Prostate gland (tissue), 2 donors: ENCODE measurements at regions of chr7 and their contacts with region 1.

Region 1: DNA sequence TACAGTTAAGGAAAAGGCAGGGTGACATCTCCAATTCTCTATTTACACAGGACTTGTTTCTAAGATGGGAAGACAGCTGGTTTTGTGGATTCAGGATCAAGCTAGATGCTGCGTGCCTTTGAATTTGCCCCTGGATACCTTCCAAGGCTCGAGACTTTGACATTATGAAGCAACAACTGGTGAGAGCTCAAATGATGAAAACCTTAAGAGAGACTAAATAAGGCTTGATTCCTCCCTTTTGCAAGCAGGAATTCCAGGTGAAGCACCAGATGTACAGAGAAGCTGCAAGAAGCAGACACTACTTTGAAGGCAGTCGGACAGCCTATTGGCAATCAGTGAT is 81.0 kb downstream of the ATXN7L1 start:
- DNase-seq: no peak
- H3K4me3 ChIP-seq: no peak overlapping the region
- H3K27ac ChIP-seq: peak overlapping the region; percentile 14 to 47
- H3K4me1 ChIP-seq: peaks cover 7% of the 10 kb centered on the region
- H3K27me3 ChIP-seq: no peaks in the 10 kb centered on the region
- CTCF ChIP-seq: no peak
- POLR2A ChIP-seq: no peak

Region 2: DNA sequence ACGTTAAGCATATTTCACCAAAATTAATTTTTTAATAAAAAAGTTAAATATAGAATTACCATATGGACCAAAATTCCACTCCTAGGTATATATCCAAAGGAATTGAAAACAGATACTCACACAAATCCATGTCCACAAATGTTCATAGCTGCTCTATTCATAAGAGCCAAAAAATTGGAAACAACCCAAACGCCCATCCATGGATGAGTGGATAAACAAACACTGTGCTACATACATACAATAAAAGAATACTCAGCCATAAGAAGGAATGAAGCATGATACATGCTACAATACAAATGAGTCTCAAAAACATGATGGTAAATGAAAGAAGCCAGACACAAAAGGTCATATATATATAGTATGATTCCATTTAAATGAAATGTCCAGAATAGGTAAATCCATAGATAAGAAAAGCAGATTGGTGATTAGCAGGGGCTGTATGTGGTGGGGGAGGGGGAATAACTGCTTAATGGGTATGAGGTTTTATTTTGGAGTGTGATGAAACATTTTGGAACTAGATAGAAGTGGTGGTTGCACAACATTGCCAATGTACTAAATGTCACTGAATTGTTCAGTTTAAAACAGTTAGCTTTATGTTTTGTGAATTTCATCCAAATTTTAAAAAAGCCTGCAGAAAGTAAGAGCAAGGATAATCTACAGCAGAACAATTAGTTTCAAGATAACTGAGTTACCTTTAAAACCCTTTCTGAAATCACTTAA is 112.9 kb before region 1 on chr7:
- intact Hi-C with region 1: no loop called
- DNase-seq: no peak
- H3K4me3 ChIP-seq: no peak overlapping the region
- H3K27ac ChIP-seq: no peak overlapping the region
- H3K4me1 ChIP-seq: peaks cover 4% of the 10 kb centered on the region
- H3K27me3 ChIP-seq: no peaks in the 10 kb centered on the region
- CTCF ChIP-seq: no peak
- POLR2A ChIP-seq: no peak

Region 3: DNA sequence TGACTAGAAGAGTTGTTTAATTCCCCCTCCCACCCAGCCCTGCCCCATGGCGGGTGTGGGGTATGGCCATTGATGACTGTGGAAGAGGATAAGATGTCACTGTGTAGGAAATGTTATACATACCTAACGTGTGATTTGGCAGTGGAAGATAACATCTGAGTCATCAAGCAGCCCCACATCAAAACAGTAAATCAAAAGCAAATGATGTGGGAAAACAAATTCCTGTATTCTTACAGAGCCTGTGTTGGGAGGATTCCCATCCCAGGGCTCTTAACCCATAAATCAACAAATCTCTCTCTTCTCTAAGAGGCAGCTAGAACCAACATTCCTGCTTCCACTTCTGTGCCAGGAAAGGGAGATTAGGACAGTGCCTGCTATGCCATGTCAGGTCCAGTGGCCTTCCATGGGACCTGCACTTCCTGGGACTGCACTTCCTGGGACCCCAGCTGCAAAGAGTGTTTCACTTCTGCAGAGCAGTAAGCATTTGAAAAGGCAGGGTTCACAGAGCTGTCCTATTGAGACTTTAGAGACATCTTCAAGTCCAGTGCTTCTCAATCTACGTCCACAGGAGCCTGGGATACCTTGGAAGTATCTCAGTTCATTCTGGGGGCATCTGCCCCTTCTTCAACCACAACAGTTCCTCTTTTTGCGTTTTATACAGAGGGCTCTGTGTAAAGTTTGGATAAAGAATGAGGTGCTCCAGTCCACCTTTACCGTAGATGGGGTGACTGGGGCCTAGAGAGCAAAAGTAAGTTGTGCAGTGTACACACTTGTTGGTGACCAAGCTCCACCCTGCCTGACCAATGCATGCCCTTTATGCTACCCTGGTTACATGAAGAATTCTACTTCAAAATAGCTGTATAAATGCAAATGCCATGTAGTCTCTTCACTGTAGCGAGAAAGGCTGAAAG is 35.3 kb after region 1 on chr7:
- intact Hi-C with region 1: loop called (anchors 5 kb)
- DNase-seq: peak; percentile 30
- H3K4me3 ChIP-seq: no peak overlapping the region
- H3K27ac ChIP-seq: peak overlapping the region in 1 of 2 donors; percentile 24
- H3K4me1 ChIP-seq: peaks cover 3% of the 10 kb centered on the region
- H3K27me3 ChIP-seq: no peaks in the 10 kb centered on the region
- CTCF ChIP-seq: no peak
- POLR2A ChIP-seq: no peak

Region 4: GRCh38 chr7:105876091-105876963 is 81.0 kb after region 1 on chr7 and contains the start of gene ATXN7L1:
- intact Hi-C with region 1: loop called (anchors 10 kb)
- DNase-seq: peak; percentile 96
- H3K4me3 ChIP-seq: peak within 1 kb of the TSS; percentile 56 to 58
- H3K27ac ChIP-seq: peak within 1 kb of the TSS; percentile 79 to 85
- H3K4me1 ChIP-seq: no peaks in the 10 kb centered on the region
- H3K27me3 ChIP-seq: no peaks in the 10 kb centered on the region
- CTCF ChIP-seq: peak; percentile 50 to 85 (median 64)
- POLR2A ChIP-seq: peak; percentile 78
- total RNA-seq, gene ATXN7L1: 12.6 to 28.1 TPM

Region 5: DNA sequence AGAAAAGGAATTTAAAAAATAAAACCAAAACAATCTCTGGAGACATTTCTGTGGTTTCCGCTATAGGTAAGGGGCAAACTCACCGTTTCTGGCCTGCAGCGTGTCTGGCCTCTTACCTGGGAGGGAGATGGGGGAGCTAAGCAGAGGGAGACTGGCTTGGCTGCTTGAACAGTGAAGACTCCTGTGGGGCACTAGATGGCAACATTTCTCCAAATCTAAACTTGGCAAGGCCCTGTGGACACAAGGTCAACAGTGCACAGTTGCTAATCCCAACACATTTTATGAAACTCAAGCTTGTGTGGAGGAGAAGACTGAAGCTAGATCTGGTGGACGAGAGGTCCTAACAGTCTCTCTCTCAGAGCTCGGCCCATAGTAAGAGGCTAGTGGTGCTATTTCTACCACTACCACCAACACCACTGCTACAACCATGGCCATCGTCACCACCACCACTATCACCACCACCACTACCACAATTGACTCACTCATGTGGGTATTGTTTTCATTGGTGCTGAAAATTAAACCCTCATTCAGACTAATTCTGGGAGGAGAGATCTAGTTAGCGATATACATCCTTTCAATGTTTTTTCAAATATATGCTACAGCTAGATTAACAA is 139.3 kb after region 1 on chr7:
- intact Hi-C with region 1: no loop called
- DNase-seq: peak; percentile 27
- H3K4me3 ChIP-seq: no peak overlapping the region
- H3K27ac ChIP-seq: no peak overlapping the region
- H3K4me1 ChIP-seq: no peaks in the 10 kb centered on the region
- H3K27me3 ChIP-seq: no peaks in the 10 kb centered on the region
- CTCF ChIP-seq: peak in 3 of 4 experiments; percentile 23 to 50 (median 33)
- POLR2A ChIP-seq: no peak

Region 6: DNA sequence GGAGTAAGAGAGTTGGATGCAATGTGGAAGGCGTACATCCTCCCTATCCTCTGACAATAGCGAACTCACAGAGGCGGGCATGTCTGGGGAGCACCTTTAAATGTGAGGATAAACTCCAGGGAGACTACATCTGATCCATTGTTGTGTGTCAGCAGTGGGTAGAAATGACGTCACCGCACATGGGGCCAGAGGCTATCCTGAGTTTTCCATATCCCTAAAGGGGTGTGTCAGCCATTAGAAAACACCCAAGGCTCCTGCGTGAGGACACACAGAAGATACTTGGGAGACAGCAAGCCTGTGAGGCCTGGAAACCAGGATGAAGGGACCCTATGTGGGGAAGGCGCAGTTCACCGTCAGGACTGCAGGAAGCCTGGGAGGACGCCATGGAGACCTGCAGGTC is 150.5 kb after region 1 on chr7:
- intact Hi-C with region 1: no loop called
- DNase-seq: no peak
- H3K4me3 ChIP-seq: no peak overlapping the region
- H3K27ac ChIP-seq: no peak overlapping the region
- H3K4me1 ChIP-seq: no peaks in the 10 kb centered on the region
- H3K27me3 ChIP-seq: no peaks in the 10 kb centered on the region
- CTCF ChIP-seq: no peak
- POLR2A ChIP-seq: no peak